ENCODE measurements at regions of chr3 and their contacts with region 1.

Region 1: GRCh38 chr3:29764603-29765254 is 483.9 kb downstream of the RBMS3 start:
- DNase-seq: no peak
- H3K4me3 ChIP-seq: no peak overlapping the region
- H3K27ac ChIP-seq: no peak overlapping the region
- H3K4me1 ChIP-seq: peaks cover 12% of the 10 kb centered on the region
- H3K27me3 ChIP-seq: no peaks in the 10 kb centered on the region
- CTCF ChIP-seq: peak in 2 of 3 experiments; percentile 1 to 31
- POLR2A ChIP-seq: no peak

Region 2: DNA sequence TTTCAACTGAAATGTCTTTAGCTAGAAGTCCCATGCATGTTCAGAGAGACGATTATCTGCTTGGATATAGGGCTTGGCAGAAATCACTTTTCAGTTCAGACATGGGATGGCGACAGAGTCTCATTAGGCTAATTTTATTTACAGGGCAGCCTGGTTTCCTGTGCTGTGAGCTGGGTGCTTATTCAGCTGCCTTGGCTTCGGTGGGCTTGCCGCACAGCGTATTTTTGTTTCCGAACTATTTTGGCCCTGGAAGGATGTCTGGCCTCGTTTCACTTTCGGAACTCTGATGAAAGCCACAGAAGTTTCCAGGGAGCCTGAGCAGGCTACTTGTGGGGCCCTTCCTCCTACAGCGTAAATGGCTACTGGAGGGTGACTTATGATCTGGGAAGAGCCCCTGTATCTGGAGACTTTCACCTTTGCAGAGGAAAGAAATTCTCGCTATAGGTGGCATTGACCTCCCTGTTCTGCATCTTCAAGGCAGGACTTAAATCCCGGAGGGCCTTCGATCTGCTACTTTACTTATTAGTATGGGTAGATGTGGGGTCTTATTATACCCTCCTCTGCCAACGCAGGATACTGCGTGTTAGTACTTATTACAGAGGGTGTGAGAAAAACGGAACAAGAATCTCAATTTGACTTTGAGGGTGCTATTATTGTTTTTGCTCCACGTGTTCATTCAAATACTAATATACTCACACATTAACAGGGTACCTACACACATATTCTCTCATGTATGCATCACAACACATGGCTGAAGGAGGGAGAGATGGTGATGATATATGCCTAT is 847.8 kb before region 1 on chr3:
- intact Hi-C with region 1: loop called (anchors 10 kb)
- DNase-seq: no peak
- H3K4me3 ChIP-seq: peak overlapping the region; percentile 20 to 27
- H3K27ac ChIP-seq: peak overlapping the region; percentile 11
- H3K4me1 ChIP-seq: no peaks in the 10 kb centered on the region
- H3K27me3 ChIP-seq: no peaks in the 10 kb centered on the region
- CTCF ChIP-seq: peak in 1 of 3 experiments; percentile 30
- POLR2A ChIP-seq: no peak